GM12878 (cell line): ENCODE measurements at regions of chr12 and their contacts with region 1.

Region 1: GRCh38 chr12:30806989-30807694 is 52.4 kb upstream of the CAPRIN2 start:
- DNase-seq: peak; percentile 21
- ATAC-seq: peak; percentile 86
- H3K4me3 ChIP-seq: no peak overlapping the region
- H3K27ac ChIP-seq: no peak overlapping the region
- H3K4me1 ChIP-seq: no peaks in the 10 kb centered on the region
- H3K27me3 ChIP-seq: no peaks in the 10 kb centered on the region
- CTCF ChIP-seq: peak; percentile 68 to 80 (median 77)
- EP300 ChIP-seq: no peak
- POLR2A ChIP-seq: no peak
- RAD21 ChIP-seq: peak; percentile 95

Region 2: DNA sequence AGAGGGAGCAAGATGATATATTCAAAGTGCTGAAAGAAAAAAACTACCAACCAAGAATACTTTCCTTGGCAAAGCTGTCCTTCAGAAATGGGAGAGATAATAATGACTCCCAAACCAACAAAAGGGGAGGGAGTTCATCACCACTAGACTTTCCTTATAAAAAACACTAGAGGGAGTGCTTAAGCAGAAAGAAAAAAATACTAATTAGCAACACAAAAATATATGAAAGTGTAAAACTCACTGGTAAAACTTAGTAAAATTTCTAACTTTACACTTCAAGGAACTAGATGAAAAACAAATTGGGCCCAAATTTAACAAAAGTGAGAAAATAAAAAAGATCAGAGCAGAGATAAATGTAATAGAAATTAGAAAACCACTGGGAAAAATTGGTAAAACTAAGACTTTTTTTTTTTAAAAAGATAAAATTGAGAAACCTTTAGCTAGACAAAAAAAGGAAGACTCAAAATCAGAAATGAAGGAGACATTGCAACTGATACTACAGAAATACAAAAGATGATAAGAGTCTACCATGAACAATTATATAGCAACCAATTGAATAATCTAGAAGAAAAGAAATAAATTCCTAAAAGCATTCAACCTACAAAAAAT is 1718.4 kb before region 1 on chr12:
- CTCF ChIA-PET with region 1: no interaction called
- POLR2A ChIA-PET with region 1: no interaction called
- RAD21 ChIA-PET with region 1: no interaction called
- SMC1A ChIA-PET with region 1: no interaction called
- in situ Hi-C with region 1: no loop called
- intact Hi-C with region 1: loop called (anchors 10 kb)
- DNase-seq: no peak
- ATAC-seq: 0 out of 3 replicates have a peak, but pooled peaks have one; percentile 21
- H3K4me3 ChIP-seq: no peak overlapping the region
- H3K27ac ChIP-seq: no peak overlapping the region
- H3K4me1 ChIP-seq: peaks cover 6% of the 10 kb centered on the region; the same call in 1 of the 2 replicates
- H3K27me3 ChIP-seq: no peaks in the 10 kb centered on the region
- CTCF ChIP-seq: peak; percentile 27 to 35 (median 35); a peak in 3 of 6 replicates
- EP300 ChIP-seq: no peak
- POLR2A ChIP-seq: no peak
- RAD21 ChIP-seq: peak; percentile 61

Region 3: DNA sequence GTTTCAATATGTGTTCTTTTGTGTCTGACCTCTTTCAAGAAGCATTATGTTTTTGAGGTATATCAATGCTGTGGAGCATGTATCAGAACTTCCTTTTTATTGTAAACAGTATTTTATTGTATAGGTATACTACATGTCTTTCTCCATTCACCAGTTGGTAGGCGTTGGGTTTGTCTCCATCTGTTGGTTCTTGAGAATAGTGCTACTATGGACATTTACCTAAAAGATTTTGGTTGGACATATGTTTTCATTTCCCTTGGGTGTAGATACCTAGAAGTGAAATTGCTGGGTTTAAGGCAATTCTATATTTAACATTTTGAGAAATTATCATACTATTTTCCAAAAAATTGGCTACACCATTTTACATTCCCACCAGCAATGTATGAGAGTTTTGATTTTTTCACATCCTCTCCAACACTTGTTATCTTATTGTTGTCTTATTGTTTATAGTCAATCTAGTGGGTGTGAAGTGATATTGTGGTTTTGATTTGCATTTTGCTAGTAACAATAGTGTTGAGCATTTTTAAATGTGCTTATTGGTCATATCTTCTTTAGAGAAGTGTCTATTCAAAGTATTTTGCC is 520.7 kb before region 1 on chr12:
- CTCF ChIA-PET with region 1: no interaction called
- POLR2A ChIA-PET with region 1: no interaction called
- RAD21 ChIA-PET with region 1: no interaction called
- SMC1A ChIA-PET with region 1: no interaction called
- in situ Hi-C with region 1: no loop called
- intact Hi-C with region 1: loop called (anchors 2 kb)
- DNase-seq: no peak
- ATAC-seq: peak; percentile 72
- H3K4me3 ChIP-seq: no peak overlapping the region
- H3K27ac ChIP-seq: no peak overlapping the region
- H3K4me1 ChIP-seq: no peaks in the 10 kb centered on the region
- H3K27me3 ChIP-seq: no peaks in the 10 kb centered on the region
- CTCF ChIP-seq: peak; percentile 24 to 52 (median 24); a peak in 3 of 6 replicates
- EP300 ChIP-seq: no peak
- POLR2A ChIP-seq: no peak
- RAD21 ChIP-seq: peak; percentile 57

Region 4: GRCh38 chr12:30515351-30515750 is 291.8 kb before region 1 on chr12:
- CTCF ChIA-PET with region 1: no interaction called
- POLR2A ChIA-PET with region 1: no interaction called
- RAD21 ChIA-PET with region 1: no interaction called
- SMC1A ChIA-PET with region 1: no interaction called
- in situ Hi-C with region 1: no loop called
- intact Hi-C with region 1: loop called (anchors 10 kb)
- DNase-seq: no peak
- ATAC-seq: no peak
- H3K4me3 ChIP-seq: no peak overlapping the region
- H3K27ac ChIP-seq: no peak overlapping the region
- H3K4me1 ChIP-seq: no peaks in the 10 kb centered on the region
- H3K27me3 ChIP-seq: no peaks in the 10 kb centered on the region
- CTCF ChIP-seq: no peak; a peak in 1 of 6 replicates
- EP300 ChIP-seq: no peak
- POLR2A ChIP-seq: no peak
- RAD21 ChIP-seq: no peak

Region 5: GRCh38 chr12:30754709-30755394 is 52.3 kb before region 1 on chr12 and contains the start of gene CAPRIN2:
- CTCF ChIA-PET with region 1: interaction called, 17 read pairs
- POLR2A ChIA-PET with region 1: no interaction called
- RAD21 ChIA-PET with region 1: interaction called, 3 read pairs
- SMC1A ChIA-PET with region 1: interaction called, 4 read pairs
- in situ Hi-C with region 1: no loop called
- intact Hi-C with region 1: loop called (anchors 2 kb)
- DNase-seq: peak; percentile 52
- ATAC-seq: peak; percentile 95
- H3K4me3 ChIP-seq: peak within 1 kb of the TSS; percentile 90
- H3K27ac ChIP-seq: peak within 1 kb of the TSS; percentile 50; the same call in 1 of the 2 replicates
- H3K4me1 ChIP-seq: peaks cover 6% of the 10 kb centered on the region; the same call in 1 of the 2 replicates
- H3K27me3 ChIP-seq: no peaks in the 10 kb centered on the region
- CTCF ChIP-seq: peak in 2 of 3 experiments; percentile 11 to 46; a peak in 3 of 6 replicates
- EP300 ChIP-seq: no peak
- POLR2A ChIP-seq: peak; percentile 90
- RAD21 ChIP-seq: peak; percentile 38; the same call in 1 of the 2 replicates
- polyA plus RNA-seq, gene CAPRIN2: 1.2 to 3.0 TPM